ENCODE measurements at regions of chr2 and their contacts with region 1.

Region 1: GRCh38 chr2:240856151-240856980 is 12.3 kb upstream of the AGXT start:
- DNase-seq: peak; percentile 59 to 95 (median 94)
- ATAC-seq: peak; percentile 57 to 62 (median 60)
- H3K4me3 ChIP-seq: peak overlapping the region in 1 of 3 donors; percentile 33
- H3K27ac ChIP-seq: peak overlapping the region in 2 of 3 donors; percentile 38 to 91
- H3K4me1 ChIP-seq: peaks cover 0 to 35% (median 15%) of the 10 kb centered on the region in 4 donors
- H3K27me3 ChIP-seq: no peaks in the 10 kb centered on the region
- CTCF ChIP-seq: peak; percentile 37 to 52 (median 46)
- POLR2A ChIP-seq: peak; percentile 34

Region 2: GRCh38 chr2:240893363-240893844 is 37.0 kb after region 1 on chr2:
- intact Hi-C with region 1: loop called in 1 of 2 experiments (anchors 5 kb)
- DNase-seq: peak in 1 of 3 donors; percentile 53
- ATAC-seq: no peak
- H3K4me3 ChIP-seq: no peak overlapping the region
- H3K27ac ChIP-seq: no peak overlapping the region
- H3K4me1 ChIP-seq: peaks cover 0 to 47% (median 22%) of the 10 kb centered on the region in 4 donors
- H3K27me3 ChIP-seq: no peaks in the 10 kb centered on the region
- CTCF ChIP-seq: no peak
- POLR2A ChIP-seq: no peak

Region 3: GRCh38 chr2:241009601-241010530 is 153.5 kb after region 1 on chr2:
- intact Hi-C with region 1: no loop called
- DNase-seq: peak in 2 of 3 donors; percentile 57 to 60
- ATAC-seq: peak; percentile 62 to 72 (median 72)
- H3K4me3 ChIP-seq: no peak overlapping the region
- H3K27ac ChIP-seq: no peak overlapping the region
- H3K4me1 ChIP-seq: no peaks in the 10 kb centered on the region
- H3K27me3 ChIP-seq: no peaks in the 10 kb centered on the region
- CTCF ChIP-seq: no peak
- POLR2A ChIP-seq: no peak